K562 (cell line): ENCODE measurements at regions of chrX and their contacts with region 1.

Region 1: GRCh38 chrX:120090208-120090607 is 12.7 kb upstream of the RHOXF2B start:
- DNase-seq: peak in 1 of 4 experiments; percentile 8
- ATAC-seq: peak; percentile 63
- H3K4me3 ChIP-seq: no peak overlapping the region
- H3K27ac ChIP-seq: no peak overlapping the region
- H3K4me1 ChIP-seq: no peaks in the 10 kb centered on the region; a peak in 1 of 5 replicates
- H3K27me3 ChIP-seq: no peaks in the 10 kb centered on the region
- CTCF ChIP-seq: peak in 2 of 3 experiments; percentile 35; a peak in 4 of 6 replicates
- EP300 ChIP-seq: no peak
- POLR2A ChIP-seq: no peak
- RAD21 ChIP-seq: no peak

Region 2: GRCh38 chrX:120144178-120144844 is 54.1 kb after region 1 on chrX:
- CTCF ChIA-PET with region 1: no interaction called
- POLR2A ChIA-PET with region 1: no interaction called
- in situ Hi-C with region 1: loop called (anchors 5 kb)
- intact Hi-C with region 1: loop called (anchors 10 kb)
- DNase-seq: peak; percentile 14 to 57 (median 24)
- ATAC-seq: peak; percentile 83
- H3K4me3 ChIP-seq: no peak overlapping the region
- H3K27ac ChIP-seq: peak overlapping the region; percentile 43; the same call in 2 of the 3 replicates
- H3K4me1 ChIP-seq: peaks cover 8 to 15% of the 10 kb centered on the region in 2 experiments; a peak in 4 of 5 replicates
- H3K27me3 ChIP-seq: no peaks in the 10 kb centered on the region
- CTCF ChIP-seq: no peak
- EP300 ChIP-seq: no peak
- POLR2A ChIP-seq: no peak
- RAD21 ChIP-seq: no peak

Region 3: DNA sequence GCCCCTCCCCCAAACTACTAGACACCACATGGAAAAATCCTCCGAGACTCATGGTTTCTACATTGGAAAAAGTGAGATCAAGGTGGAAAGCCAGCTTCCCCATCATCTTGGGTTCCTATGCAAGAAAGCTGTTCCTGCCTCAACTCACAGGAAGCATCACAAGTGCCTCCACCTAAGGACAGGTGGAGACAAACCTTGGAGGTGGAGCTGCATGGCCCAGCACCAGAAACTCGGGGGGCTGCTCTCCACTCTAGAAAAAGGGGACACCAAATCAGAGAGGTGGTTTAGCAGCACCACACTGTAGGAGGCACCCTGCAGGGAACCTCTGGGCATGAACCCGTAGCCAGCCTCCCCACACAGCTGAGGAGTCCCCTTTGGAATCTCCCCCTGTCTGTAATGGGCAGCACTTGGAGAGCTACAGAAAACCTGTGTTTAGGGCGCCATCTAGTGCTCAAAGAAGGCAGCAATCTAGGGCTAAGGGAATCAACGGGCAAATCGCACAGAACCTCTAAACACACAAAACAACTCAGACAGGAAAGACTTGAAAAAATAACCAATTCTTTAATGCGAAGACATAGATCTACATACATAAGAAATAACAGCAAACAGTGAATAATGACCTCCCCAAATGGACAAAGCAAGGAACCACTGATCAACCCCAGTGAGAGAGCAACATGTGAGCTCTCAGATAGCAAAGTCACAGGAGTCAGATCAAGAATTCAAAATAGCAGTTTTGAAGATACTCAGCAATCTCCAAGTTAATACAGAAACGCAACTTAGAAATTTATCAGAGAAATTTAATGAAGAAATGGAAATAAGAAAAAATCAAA is 123.4 kb after region 1 on chrX:
- CTCF ChIA-PET with region 1: no interaction called
- POLR2A ChIA-PET with region 1: no interaction called
- in situ Hi-C with region 1: no loop called
- intact Hi-C with region 1: loop called (anchors 10 kb)
- DNase-seq: peak; percentile 46 to 72 (median 57)
- ATAC-seq: peak; percentile 97
- H3K4me3 ChIP-seq: no peak overlapping the region
- H3K27ac ChIP-seq: no peak overlapping the region
- H3K4me1 ChIP-seq: no peaks in the 10 kb centered on the region; a peak in 1 of 5 replicates
- H3K27me3 ChIP-seq: no peaks in the 10 kb centered on the region
- CTCF ChIP-seq: peak; percentile 75 to 95 (median 84)
- EP300 ChIP-seq: no peak
- POLR2A ChIP-seq: no peak
- RAD21 ChIP-seq: peak; percentile 62 to 67